Heart right ventricle (tissue), 16 donors: ENCODE measurements at regions of chr15 and their contacts with region 1.

Region 1: GRCh38 chr15:58285212-58285920 is 146.4 kb upstream of the LIPC start:
- DNase-seq: no peak
- ATAC-seq: no peak
- H3K4me3 ChIP-seq: no peak overlapping the region
- H3K27ac ChIP-seq: no peak overlapping the region
- H3K4me1 ChIP-seq: peaks cover 0 to 8% (median 0%) of the 10 kb centered on the region in 9 donors
- H3K27me3 ChIP-seq: no peaks in the 10 kb centered on the region
- CTCF ChIP-seq: no peak

Region 2: GRCh38 chr15:58165661-58166060 is 119.7 kb before region 1 on chr15:
- intact Hi-C with region 1: no loop called
- DNase-seq: peak; percentile 34 to 65
- ATAC-seq: peak in 7 of 8 donors; percentile 67 to 86 (median 81)
- H3K4me3 ChIP-seq: no peak overlapping the region
- H3K27ac ChIP-seq: no peak overlapping the region
- H3K4me1 ChIP-seq: peaks cover 0 to 13% (median 8%) of the 10 kb centered on the region in 9 donors
- H3K27me3 ChIP-seq: peaks cover 0 to 8% (median 2%) of the 10 kb centered on the region in 7 donors
- CTCF ChIP-seq: no peak

Region 3: DNA sequence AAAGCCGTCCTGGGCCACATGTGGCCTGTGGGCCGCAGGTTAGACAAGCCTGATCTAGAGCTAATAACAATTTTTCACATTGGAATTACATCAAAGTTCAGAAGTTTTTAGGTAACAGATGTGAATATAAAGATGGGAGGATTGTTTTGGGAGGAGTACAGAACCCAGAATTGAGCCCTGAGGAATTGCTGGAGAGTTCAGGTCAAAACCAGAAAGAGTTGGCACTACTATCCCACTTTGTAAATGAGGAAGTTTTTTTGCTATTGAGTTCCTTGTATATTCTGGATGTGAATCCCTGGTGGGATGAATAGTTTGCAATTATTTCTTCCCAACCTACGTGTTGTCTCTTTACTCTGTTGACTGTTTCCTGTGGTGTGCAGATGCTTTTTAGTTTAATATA is 36.9 kb after region 1 on chr15:
- intact Hi-C with region 1: loop called in 1 of 10 experiments (anchors 5 kb)
- DNase-seq: no peak
- ATAC-seq: no peak
- H3K4me3 ChIP-seq: no peak overlapping the region
- H3K27ac ChIP-seq: no peak overlapping the region
- H3K4me1 ChIP-seq: peaks cover 0 to 6% (median 0%) of the 10 kb centered on the region in 9 donors
- H3K27me3 ChIP-seq: no peaks in the 10 kb centered on the region
- CTCF ChIP-seq: no peak

Region 4: DNA sequence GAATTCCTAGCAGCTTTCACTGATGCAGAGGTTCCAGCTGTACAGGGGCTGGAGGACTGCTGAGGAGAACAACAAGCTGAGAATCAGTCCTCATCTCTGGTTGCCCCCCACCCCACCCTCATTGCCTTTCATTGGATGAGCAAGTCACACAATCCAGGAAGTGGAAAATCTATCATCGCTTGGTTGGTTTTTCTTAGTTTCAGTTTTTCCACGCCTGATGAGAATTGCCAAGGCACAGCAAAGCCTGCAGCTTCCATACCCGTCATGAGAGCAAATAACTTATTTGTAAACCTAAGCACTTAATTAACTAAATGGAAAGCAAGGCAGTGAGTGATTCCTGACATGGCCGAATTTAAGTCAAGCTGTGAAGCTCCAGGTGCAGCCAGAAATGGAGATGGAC is 125.0 kb after region 1 on chr15:
- intact Hi-C with region 1: loop called in 1 of 10 experiments (anchors 5 kb)
- DNase-seq: peak in 1 of 2 donors; percentile 13
- ATAC-seq: peak in 3 of 8 donors; percentile 18 to 81 (median 64)
- H3K4me3 ChIP-seq: peak overlapping the region in 5 of 10 donors; percentile 32 to 44 (median 36)
- H3K27ac ChIP-seq: peak overlapping the region in 1 of 10 donors; percentile 4
- H3K4me1 ChIP-seq: no peaks in the 10 kb centered on the region
- H3K27me3 ChIP-seq: no peaks in the 10 kb centered on the region
- CTCF ChIP-seq: no peak

Region 5: DNA sequence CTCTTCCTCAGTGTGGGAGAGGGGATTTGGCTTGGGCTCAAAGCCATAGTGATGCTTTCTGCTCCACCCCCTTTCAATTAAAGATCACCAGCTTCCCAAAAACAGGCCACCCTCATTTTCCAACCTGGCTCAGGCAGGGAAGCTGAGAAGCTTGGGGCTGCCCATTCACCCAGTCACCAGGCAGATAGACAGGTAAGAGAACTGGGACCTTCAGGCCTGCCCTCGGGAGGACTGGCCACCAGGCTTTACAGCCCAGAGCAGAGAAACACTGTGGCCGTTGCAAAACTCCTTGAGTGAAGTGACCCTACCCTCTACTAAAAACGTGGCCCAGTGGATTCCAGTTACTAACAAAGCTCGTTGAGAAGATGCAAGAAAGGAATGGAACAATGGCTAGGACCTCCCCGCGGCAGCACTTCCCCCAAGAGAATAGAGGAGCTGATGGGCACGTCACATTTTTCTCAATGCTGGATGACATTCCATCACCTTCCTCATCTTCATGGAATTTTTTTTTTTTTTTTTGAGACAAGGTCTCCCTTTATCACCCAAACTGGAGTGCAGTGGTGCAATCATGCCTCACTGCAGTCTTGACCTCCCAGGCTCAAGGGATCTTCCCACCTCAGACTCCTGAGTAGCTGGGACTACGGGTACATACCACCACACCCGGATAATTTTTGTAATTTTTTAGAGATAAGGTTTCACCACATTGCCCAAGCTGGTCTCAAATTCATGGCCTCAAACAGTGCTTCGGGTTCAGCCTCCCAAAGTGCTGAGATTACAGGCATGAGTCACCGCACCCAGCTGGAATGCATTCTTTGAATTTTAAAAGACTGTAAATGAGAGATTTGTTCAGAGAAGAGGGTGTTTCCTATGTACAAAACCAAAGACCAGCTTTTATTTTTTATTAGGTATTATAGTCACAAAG is 184.3 kb after region 1 on chr15:
- intact Hi-C with region 1: no loop called
- DNase-seq: no peak
- ATAC-seq: peak in 5 of 8 donors; percentile 24 to 82 (median 46)
- H3K4me3 ChIP-seq: no peak overlapping the region
- H3K27ac ChIP-seq: peak overlapping the region in 2 of 10 donors; percentile 1 to 33
- H3K4me1 ChIP-seq: peaks cover 0 to 38% (median 15%) of the 10 kb centered on the region in 9 donors
- H3K27me3 ChIP-seq: no peaks in the 10 kb centered on the region
- CTCF ChIP-seq: no peak

Region 6: DNA sequence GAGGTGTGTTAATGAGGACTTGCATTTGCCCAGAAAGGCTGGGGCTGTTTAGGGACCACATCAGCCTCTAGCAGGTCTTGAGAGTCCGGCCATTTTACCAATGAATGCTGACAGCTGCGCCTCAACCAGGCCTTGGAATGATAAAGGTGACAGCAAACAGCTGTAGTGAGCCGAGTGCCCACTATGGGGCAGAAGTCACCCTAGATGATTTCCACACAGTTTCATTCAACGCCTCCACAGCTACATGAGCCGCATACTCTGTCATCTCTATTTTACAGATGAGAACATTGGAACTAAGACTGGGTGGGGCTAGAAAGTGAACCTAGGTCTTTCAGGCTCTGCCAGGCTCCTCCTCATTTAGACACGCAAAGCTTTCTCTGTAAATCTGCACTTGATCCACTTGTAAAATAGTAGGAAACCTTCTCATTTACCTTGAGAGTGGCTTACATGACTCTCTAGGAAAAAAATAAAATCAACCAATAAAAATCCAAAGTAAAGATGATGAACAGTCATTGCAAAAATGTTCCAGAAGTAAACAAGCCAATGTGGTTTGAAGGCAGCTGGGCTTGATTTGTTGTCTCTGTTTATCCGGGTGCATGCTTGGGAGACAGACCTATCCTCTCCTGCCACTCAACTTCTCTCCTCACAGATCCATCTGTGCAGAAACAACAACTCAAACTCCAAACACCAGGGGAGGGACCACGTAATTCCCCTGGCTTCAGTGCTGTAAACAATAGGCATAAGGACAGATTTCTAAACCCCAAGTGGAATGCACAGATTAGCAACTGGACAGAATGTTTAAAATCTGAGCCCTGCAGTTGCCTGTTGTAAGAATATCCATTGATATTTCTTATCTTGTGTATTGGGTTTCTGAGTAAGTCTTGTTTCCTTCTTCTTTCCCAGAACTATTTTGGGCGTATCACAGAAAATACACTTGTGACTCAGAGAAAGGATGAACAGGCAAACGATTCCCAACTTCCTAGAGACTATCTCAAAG is 889.8 kb after region 1 on chr15:
- intact Hi-C with region 1: no loop called
- DNase-seq: peak; percentile 32 to 44
- ATAC-seq: peak; percentile 64 to 84 (median 81)
- H3K4me3 ChIP-seq: no peak overlapping the region
- H3K27ac ChIP-seq: peak overlapping the region in 2 of 10 donors; percentile 58 to 69
- H3K4me1 ChIP-seq: peaks cover 0 to 49% (median 11%) of the 10 kb centered on the region in 9 donors
- H3K27me3 ChIP-seq: no peaks in the 10 kb centered on the region
- CTCF ChIP-seq: peak; percentile 17 to 73 (median 55)